Activated naive CD4-positive, alpha-beta T cell treated with anti-CD3 and anti-CD28 coated beads for 36 hours (primary cell): ENCODE measurements at regions of chr9 and their contacts with region 1.

Region 1: GRCh38 chr9:112793213-112793810 is 42.8 kb downstream of the SNX30 start:
- DNase-seq: peak; percentile 93
- H3K4me3 Mint-ChIP-seq: no peak overlapping the region
- H3K27ac Mint-ChIP-seq: no peak overlapping the region
- H3K4me1 Mint-ChIP-seq: peaks cover 7% of the 10 kb centered on the region
- H3K27me3 Mint-ChIP-seq: no peaks in the 10 kb centered on the region

Region 2: DNA sequence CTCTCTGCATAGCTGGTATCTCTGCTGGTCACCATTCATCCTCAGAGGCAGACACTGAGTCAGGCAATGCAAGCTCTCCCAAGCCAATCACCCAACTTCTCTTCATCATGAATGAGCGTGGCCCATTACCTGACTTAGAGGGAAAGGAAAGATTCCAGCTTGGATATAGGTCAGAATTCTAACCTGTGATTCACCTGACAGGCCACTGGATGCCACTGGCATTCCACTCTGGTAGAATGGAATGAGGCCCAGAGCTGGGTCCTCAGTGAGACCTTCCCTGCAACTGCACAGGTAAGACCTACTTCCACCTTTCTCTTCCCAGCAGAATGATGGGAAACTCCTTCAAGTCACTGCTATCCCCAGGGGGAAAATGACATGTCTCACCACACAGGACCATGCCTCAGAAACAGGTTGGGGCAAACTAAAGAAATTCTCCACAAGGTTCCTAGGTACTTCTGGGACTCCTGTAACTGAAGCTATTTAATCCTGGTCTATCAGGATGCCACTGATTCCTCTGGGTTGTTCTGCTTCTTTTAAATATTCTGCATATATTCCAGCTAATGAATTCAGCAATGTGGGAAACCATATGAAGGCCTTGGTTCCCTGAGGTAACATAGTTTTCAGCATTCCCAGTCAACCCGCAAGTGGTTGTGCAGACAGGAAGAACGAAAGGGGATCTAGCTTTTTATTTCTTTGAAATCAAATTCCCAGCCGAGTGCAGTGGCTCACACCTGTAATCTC is 680.2 kb before region 1 on chr9:
- CTCF ChIA-PET with region 1: interaction called, 3 read pairs
- intact Hi-C with region 1: loop called (anchors 1 kb)
- DNase-seq: peak; percentile 45
- H3K4me3 Mint-ChIP-seq: no peak overlapping the region
- H3K27ac Mint-ChIP-seq: no peak overlapping the region
- H3K4me1 Mint-ChIP-seq: no peaks in the 10 kb centered on the region
- H3K27me3 Mint-ChIP-seq: no peaks in the 10 kb centered on the region

Region 3: GRCh38 chr9:112486221-112487007 is 306.9 kb before region 1 on chr9 and contains the start of gene KIAA1958:
- CTCF ChIA-PET with region 1: interaction called, 7 read pairs
- intact Hi-C with region 1: loop called (anchors 5 kb)
- DNase-seq: peak; percentile 91
- H3K4me3 Mint-ChIP-seq: peak within 1 kb of the TSS; percentile 93
- H3K27ac Mint-ChIP-seq: peak within 1 kb of the TSS; percentile 88
- H3K4me1 Mint-ChIP-seq: peaks cover 34% of the 10 kb centered on the region
- H3K27me3 Mint-ChIP-seq: no peaks in the 10 kb centered on the region
- total RNA-seq, gene KIAA1958: 6.7 to 7.6 TPM

Region 4: GRCh38 chr9:112717661-112718341 is 75.5 kb before region 1 on chr9 and contains the start of gene INIP:
- CTCF ChIA-PET with region 1: interaction called, 19 read pairs
- intact Hi-C with region 1: loop called (anchors 1 kb)
- DNase-seq: peak; percentile 97
- H3K4me3 Mint-ChIP-seq: peak within 1 kb of the TSS; percentile 97
- H3K27ac Mint-ChIP-seq: peak within 1 kb of the TSS; percentile 94
- H3K4me1 Mint-ChIP-seq: peaks cover 23% of the 10 kb centered on the region
- H3K27me3 Mint-ChIP-seq: no peaks in the 10 kb centered on the region
- total RNA-seq, gene INIP: 31.1 to 33.4 TPM

Region 5: GRCh38 chr9:112750111-112750767 is 43.1 kb before region 1 on chr9 and contains the start of gene SNX30:
- CTCF ChIA-PET with region 1: interaction called, 12 read pairs
- intact Hi-C with region 1: loop called (anchors 1 kb)
- DNase-seq: peak; percentile 84
- H3K4me3 Mint-ChIP-seq: peak within 1 kb of the TSS; percentile 81
- H3K27ac Mint-ChIP-seq: peak within 1 kb of the TSS; percentile 74
- H3K4me1 Mint-ChIP-seq: peaks cover 63% of the 10 kb centered on the region
- H3K27me3 Mint-ChIP-seq: no peaks in the 10 kb centered on the region
- total RNA-seq, gene SNX30: 4.1 to 4.6 TPM